Heart right ventricle (tissue), 16 donors: ENCODE measurements at regions of chr22 and their contacts with region 1.

Region 1: GRCh38 chr22:43129426-43130425 is 13.5 kb downstream of the MCAT start:
- DNase-seq: no peak
- ATAC-seq: no peak
- H3K4me3 ChIP-seq: no peak overlapping the region
- H3K27ac ChIP-seq: no peak overlapping the region
- H3K4me1 ChIP-seq: peaks cover 0 to 40% (median 14%) of the 10 kb centered on the region in 9 donors
- H3K27me3 ChIP-seq: no peaks in the 10 kb centered on the region
- CTCF ChIP-seq: no peak

Region 2: DNA sequence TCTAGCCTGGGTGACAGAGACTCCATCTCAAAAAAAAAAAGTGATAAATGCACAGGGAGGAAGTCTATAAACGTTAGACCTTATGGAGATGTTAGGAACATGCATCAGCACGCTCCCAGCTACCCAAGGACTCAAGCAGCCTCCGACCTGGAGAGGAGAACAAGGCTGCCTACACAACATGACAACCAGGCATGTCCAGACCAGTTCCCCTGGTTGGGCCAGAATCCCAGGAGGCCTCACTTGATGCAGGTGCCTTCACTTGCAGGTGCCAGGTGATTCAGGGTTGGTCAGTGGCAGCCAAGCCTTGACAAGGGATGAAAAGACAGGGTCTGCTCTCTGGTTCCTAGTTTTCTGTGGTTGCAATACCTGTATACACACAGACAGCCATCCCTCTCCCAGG is 1849.7 kb before region 1 on chr22:
- intact Hi-C with region 1: loop called in 1 of 10 experiments (anchors 5 kb)
- DNase-seq: no peak
- ATAC-seq: peak in 1 of 8 donors; percentile 31
- H3K4me3 ChIP-seq: no peak overlapping the region
- H3K27ac ChIP-seq: no peak overlapping the region
- H3K4me1 ChIP-seq: peaks cover 0 to 6% (median 5%) of the 10 kb centered on the region in 9 donors
- H3K27me3 ChIP-seq: no peaks in the 10 kb centered on the region
- CTCF ChIP-seq: no peak

Region 3: DNA sequence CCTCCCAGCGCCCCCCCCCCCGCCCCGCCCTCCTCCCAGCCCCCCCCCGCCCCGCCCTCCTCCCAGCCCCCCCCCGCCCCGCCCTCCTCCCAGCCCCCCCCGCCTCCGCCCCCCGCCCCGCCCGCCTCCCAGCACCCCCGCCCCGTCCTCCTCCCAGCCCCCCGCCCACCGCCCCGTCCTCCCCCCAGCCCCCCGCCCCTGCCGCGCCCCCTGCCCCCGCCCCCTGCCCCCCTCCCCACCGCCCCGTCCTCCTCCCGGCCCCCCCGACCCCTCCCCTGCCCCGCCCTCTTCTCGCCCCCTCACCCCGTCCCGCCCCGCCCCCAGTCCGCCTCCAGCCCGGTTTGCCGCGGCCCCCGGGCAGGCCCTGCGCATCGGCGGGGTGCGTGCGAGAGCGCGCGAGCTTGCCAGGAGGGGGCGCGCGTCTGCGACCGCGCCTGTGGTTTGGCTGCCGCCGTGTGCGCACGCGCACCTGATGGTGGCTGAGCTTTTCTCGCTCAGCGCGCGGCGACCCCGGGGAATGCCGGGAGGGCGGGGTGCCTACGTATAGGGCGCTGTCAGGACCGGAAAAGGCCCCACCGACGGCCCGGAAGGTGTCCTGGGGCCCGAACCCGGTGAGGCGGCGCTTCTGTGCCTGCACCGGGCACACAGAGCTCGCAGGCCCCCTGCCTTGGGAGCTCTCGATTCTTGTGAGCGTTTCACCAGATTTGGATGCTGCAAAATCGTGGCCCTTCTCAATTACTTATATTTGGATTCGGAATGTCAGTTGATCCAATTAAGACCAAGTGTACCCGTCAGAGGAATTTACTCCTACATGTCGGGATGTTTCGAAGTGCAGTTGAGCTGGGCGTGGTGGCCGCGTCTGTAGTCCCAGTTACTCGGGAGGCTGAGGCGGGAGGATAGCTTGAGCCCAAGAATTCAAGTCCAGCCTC is 57.7 kb after region 1 on chr22:
- intact Hi-C with region 1: no loop called
- DNase-seq: peak; percentile 93 to 98
- ATAC-seq: peak; percentile 93 to 96 (median 95)
- H3K4me3 ChIP-seq: peak overlapping the region; percentile 27 to 88 (median 61)
- H3K27ac ChIP-seq: peak overlapping the region; percentile 70 to 97 (median 88)
- H3K4me1 ChIP-seq: peaks cover 2 to 34% (median 18%) of the 10 kb centered on the region in 9 donors
- H3K27me3 ChIP-seq: no peaks in the 10 kb centered on the region
- CTCF ChIP-seq: peak; percentile 71 to 91 (median 76)